Cardiac septum (tissue), 1 donor: ENCODE measurements at regions of chr4 and their contacts with region 1.

Region 1: DNA sequence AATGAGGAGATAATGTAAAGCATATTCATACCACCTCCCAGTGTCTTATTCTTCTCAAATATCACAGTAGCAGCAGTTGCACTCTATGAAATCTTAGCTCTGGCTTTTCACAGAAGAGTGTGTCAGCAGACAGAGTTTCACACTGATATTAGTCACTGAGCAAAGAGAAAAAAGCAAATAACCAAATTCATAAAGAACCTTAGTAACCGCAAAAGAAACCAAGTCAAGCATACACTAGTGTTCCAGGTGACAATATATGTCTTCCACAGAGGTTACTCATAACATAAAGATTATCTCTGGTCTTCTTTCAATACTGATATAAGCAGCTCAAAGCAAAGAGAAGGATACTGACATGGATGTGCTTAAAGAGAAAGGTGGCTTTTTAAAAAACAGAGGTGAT is 181.7 kb upstream of the EDNRA start:
- DNase-seq: no peak

Region 2: DNA sequence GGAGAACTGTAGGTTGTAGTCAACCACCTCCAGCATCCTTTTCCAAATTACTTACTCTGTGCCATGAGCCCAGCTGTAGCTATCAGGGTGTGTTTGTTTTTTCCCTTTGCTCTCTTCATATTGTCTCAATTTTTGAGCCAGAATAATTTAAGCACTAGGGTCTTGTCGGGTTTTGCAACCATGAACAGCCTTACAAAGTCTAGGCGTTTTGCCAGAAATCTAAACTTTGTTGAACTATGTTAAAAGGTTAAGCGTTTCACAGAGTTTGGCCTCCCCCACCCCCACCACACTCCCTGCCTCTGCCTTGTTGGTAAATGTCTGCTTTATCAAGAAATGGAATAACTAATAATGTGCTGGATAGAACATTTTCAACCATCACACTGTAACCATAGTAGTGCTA is 162.9 kb before region 1 on chr4:
- intact Hi-C with region 1: no loop called
- DNase-seq: no peak

Region 3: GRCh38 chr4:147247579-147247978 is 51.6 kb before region 1 on chr4:
- intact Hi-C with region 1: loop called (anchors 10 kb)
- DNase-seq: no peak

Region 4: GRCh38 chr4:147407261-147408045 is 108.2 kb after region 1 on chr4:
- intact Hi-C with region 1: no loop called
- DNase-seq: no peak

Region 5: DNA sequence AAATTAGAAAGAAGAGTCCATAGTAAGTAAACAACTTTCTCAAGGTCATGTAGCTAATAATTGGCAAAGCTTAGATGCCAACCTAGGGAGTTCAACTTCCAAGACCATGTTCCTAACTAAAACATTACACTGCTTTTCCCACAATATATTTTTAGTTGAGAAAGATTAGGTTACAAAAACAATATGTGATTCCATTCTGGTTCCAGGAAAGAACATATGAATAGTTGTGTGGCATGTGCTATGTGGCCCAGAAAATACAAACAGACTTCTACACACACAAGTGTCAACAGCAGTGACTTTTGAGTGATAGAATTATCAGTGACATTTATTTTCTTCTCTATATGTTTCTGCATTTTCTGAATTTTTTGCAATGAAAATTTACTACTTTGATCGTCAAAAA is 119.0 kb after region 1 on chr4:
- intact Hi-C with region 1: no loop called
- DNase-seq: no peak

Region 6: DNA sequence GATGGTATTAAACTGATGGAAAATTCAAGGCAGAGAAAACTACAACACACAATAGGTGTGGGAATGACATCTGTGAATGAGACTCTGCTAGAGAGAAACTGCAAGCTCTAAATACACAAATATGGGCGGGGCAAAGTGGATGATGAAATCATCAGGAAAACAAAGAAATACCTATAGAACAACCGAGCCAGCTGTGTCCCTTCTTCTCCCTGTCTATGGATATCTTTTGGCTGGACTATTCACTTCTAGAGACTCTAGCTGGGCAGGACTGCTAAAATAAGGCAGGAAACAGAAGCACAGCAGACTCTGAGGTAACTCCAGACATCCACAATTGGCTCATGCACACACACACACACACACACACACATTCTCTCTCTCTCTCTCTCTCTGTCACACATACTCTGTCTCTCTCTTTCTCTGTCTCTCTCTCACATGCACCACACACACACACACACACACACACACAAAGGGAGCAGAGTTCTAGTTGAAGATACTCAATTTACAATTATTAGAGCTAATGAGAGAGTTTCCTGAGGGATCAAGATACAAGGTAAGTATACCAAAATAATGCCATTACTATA is 154.4 kb after region 1 on chr4:
- intact Hi-C with region 1: no loop called
- DNase-seq: no peak